ENCODE measurements at regions of chr9 and their contacts with region 1.

Region 1: DNA sequence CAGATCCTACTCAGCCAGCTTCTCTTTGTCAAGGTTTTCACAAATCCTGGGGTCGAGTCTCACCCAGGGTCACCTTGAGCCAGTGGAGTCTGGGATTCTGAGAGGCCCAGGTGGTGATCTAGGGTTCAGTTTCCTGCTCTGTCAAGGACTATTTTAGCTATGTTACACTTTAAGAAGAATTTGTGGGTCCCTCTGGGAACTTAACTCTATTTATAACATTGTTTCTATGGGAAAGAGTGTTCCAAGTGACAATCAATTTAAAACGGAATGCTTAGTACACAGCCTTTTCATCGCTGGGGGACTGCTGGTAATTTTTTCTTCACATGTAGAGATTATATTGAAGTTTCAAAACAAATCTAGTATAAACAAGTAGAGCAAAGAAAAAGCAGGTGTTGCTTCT is 26.9 kb upstream of the TMEM252 start:
- DNase-seq: no peak

Region 2: DNA sequence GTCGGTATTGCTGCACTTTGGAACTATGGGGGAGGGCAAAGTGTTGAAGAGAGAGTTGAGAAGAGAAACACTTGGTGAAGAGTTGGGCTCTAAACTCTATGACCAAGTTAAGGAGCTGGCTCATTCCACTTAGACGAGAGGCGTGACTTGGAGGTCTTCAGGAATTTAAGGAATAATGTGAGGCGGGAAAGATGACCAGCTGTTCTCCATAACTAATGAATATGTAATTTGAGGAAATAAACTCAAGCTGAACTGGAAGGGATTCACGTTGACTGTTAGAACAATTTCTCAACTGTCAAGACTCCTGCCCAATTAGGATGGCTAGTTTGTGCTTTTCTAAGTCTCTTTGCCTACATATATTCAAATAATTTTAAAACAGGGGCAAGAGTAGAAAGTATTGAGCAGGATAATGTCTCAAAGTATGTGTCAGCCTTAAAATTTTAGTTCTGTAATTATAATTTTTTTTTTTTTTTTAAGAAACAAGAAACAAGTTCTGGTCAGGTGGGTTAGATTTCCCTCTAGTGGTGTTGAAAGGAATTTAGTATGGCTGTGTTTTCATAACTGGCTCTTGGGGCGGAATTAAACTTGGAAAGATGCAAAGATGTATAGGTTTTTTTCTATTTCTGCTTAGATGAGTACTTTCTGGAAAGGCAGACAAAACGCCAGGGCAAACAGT is 60.3 kb before region 1 on chr9:
- intact Hi-C with region 1: loop called (anchors 5 kb)
- DNase-seq: no peak

Region 3: DNA sequence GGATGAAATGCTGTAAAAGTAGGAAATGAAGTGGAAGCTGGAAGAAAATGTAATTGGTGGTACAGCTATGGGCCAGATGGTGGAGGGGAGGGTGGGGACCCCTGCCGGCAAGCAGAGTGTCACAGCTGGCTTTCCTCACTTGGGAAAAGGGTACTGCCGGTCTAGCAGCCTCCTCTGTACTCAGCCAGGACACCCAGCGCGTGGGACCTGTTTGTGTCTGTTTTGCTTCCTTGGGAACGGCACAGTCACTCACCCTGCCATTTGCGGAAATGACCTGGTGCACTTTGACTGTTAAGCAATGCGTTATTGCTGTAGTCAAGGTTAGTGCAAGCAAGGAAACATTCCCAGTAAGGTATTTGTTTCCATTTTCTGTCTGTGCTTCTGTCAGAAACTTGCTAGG is 36.9 kb before region 1 on chr9:
- intact Hi-C with region 1: loop called (anchors 5 kb)
- DNase-seq: peak; percentile 90

Region 4: DNA sequence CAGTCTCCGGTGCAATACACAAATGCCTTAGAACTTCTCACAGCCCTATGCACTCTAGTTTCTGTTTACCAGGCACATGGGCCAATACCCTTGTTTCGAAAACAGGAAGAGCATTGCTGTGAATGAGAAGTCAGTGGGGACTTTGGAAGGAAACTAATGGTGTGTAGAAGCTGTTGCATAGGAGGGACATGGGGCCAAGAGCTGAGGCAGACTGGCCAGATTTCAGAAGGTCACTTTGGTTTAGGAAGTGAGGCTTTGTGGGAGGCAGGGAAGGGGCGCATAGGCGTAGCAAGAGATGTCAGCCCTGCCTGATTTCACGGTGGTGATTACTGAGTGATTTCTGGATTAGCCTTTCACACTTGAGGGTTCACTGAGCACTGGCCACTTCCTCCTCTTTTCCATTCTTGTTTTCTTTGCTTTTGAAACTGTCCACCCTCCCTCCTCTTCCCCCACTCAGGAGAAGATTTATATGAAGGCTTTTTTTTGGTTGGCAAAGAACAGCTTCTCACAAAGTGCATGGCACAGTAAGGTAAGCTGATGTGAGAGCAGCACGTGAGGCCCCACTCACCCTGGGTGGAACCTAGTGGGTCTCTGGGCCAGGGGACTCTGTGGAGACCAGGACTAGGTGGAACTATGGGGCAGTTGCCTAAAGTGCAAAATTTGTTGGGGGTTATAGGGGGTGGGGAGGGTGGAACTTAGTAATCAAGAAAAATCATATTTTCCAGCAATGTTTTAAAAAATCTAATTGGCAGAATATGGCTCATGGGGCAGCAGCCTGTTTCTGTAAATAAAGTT is 20.8 kb before region 1 on chr9:
- intact Hi-C with region 1: no loop called
- DNase-seq: no peak

Region 5: DNA sequence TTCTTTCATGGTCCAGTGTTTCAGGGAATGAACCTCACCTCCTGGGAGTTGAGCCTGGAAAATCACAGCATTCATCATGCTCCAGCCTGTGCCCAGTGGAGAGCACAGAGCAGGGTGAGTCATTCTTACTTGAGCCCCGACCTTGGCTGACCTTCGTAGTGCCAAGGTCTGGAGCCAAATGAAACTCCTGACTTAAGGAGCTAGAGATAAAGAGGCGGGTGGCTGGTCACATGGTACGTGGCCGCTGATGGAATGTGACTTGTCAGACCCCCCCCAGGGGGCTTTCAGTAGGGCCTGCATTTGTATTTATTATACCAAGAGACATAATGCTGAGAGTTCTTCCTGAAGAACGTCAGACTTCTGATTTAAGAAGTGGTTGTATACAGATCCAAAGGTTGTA is 122.5 kb after region 1 on chr9:
- intact Hi-C with region 1: no loop called
- DNase-seq: peak; percentile 81